ENCODE measurements at regions of chr10 and their contacts with region 1.

Region 1: GRCh38 chr10:74826142-74827044 is at the start of gene KAT6B:
- DNase-seq: peak; percentile 93 to 100 (median 100)
- ATAC-seq: peak; percentile 86
- H3K4me3 ChIP-seq: peak within 1 kb of the TSS; percentile 86
- H3K4me3 Mint-ChIP-seq: peak within 1 kb of the TSS; percentile 90 to 98 (median 92)
- H3K27ac ChIP-seq: peak within 1 kb of the TSS; percentile 98
- H3K27ac Mint-ChIP-seq: peak within 1 kb of the TSS; percentile 92 to 99 (median 98)
- H3K4me1 ChIP-seq: peaks cover 22 to 50% of the 10 kb centered on the region in 2 donors
- H3K4me1 Mint-ChIP-seq: peaks cover 44 to 74% (median 69%) of the 10 kb centered on the region in 7 donors
- H3K27me3 ChIP-seq: no peaks in the 10 kb centered on the region
- H3K27me3 Mint-ChIP-seq: no peaks in the 10 kb centered on the region
- total RNA-seq, gene KAT6B: 33.2 to 80.5 (median 68.5) TPM

Region 2: GRCh38 chr10:74176380-74177139 is 649.8 kb before region 1 on chr10:
- CTCF ChIA-PET with region 1: no interaction called
- POLR2A ChIA-PET with region 1: no interaction called
- intact Hi-C with region 1: loop called in 1 of 2 experiments (anchors 2 kb)
- DNase-seq: peak; percentile 90 to 96 (median 95)
- ATAC-seq: peak; percentile 98
- H3K4me3 ChIP-seq: peak overlapping the region; percentile 84
- H3K4me3 Mint-ChIP-seq: peak overlapping the region; percentile 87 to 98 (median 93)
- H3K27ac ChIP-seq: peak overlapping the region; percentile 86
- H3K27ac Mint-ChIP-seq: peak overlapping the region; percentile 94 to 98 (median 97)
- H3K4me1 ChIP-seq: peaks cover 6 to 7% of the 10 kb centered on the region in 2 donors
- H3K4me1 Mint-ChIP-seq: peaks cover 14 to 46% (median 40%) of the 10 kb centered on the region in 7 donors
- H3K27me3 ChIP-seq: no peaks in the 10 kb centered on the region
- H3K27me3 Mint-ChIP-seq: no peaks in the 10 kb centered on the region

Region 3: DNA sequence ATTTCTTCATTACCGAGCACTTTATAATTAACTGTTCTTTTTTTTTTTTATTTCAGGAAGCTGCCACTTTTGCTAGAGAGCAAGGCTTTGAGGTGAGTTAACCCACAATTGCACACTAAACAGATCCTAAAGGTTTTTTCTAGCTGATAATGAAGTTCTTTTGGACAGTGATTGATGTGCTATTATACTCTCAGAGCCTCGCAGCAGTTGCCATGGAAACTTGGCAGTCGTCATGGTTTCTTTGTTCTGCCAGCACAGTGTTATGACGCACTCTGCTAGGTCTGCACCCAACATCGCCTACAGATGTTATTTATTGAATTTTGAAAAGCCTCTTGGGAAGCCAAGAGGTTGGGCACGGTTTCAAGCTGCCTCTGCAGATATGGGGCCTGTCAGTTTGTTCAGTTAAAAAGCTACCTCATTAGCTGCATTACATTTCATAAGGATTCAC is 237.1 kb before region 1 on chr10:
- CTCF ChIA-PET with region 1: no interaction called
- POLR2A ChIA-PET with region 1: interaction called, 5 read pairs
- intact Hi-C with region 1: loop called (anchors 1 kb)
- DNase-seq: peak; percentile 41 to 97 (median 92)
- ATAC-seq: peak; percentile 88
- H3K4me3 ChIP-seq: no peak overlapping the region
- H3K4me3 Mint-ChIP-seq: peak overlapping the region in 8 of 10 donors; percentile 6 to 75 (median 60)
- H3K27ac ChIP-seq: peak overlapping the region; percentile 69
- H3K27ac Mint-ChIP-seq: peak overlapping the region; percentile 70 to 97 (median 93)
- H3K4me1 ChIP-seq: peaks cover 37 to 42% of the 10 kb centered on the region in 2 donors
- H3K4me1 Mint-ChIP-seq: peaks cover 21 to 66% (median 59%) of the 10 kb centered on the region in 7 donors
- H3K27me3 ChIP-seq: no peaks in the 10 kb centered on the region
- H3K27me3 Mint-ChIP-seq: no peaks in the 10 kb centered on the region

Region 4: DNA sequence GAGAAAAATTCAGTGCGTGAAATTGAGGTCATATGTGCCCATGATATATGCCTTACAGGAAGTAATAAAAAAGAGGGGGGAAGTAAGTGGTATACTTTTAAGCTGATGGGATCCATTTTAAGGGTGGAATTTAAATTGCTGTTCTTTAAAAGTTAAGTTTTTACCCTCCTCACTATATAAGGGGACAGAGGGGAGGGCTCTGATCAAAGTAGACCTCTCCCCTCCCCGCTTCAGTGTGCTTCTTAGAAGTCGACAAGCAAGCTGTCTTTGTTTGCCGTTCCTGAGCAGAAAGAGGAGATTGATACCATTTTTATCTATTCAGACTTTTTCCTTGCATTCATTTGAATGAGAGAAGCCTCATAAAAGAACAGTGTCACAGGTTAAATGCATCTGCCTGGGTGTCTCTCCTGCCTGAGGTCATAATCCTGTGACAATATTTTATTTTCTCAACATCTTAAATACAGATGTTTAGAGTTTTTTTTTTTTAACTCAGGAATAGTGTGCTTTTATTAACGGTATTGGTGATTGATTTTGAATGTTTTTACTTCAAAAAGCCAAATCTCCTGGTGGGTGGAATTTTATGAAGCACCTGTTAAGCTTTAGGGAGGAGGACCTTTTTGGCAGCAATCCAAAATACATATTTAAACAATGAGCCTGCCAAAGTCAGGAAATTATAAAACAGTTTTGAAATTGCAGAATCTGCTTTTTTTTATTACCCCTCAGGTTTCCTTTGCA is 141.7 kb after region 1 on chr10:
- CTCF ChIA-PET with region 1: no interaction called
- POLR2A ChIA-PET with region 1: interaction called, 4 read pairs
- intact Hi-C with region 1: loop called in 1 of 2 experiments (anchors 1 kb)
- DNase-seq: peak in 7 of 9 donors; percentile 31 to 58 (median 49)
- ATAC-seq: peak; percentile 81
- H3K4me3 ChIP-seq: no peak overlapping the region
- H3K4me3 Mint-ChIP-seq: peak overlapping the region in 9 of 10 donors; percentile 66 to 81 (median 76)
- H3K27ac ChIP-seq: peak overlapping the region; percentile 70
- H3K27ac Mint-ChIP-seq: peak overlapping the region; percentile 7 to 97 (median 93)
- H3K4me1 ChIP-seq: peaks cover 6 to 15% of the 10 kb centered on the region in 2 donors
- H3K4me1 Mint-ChIP-seq: peaks cover 22 to 59% (median 54%) of the 10 kb centered on the region in 7 donors
- H3K27me3 ChIP-seq: no peaks in the 10 kb centered on the region
- H3K27me3 Mint-ChIP-seq: no peaks in the 10 kb centered on the region

Region 5: GRCh38 chr10:75042292-75042974 is 216.0 kb after region 1 on chr10:
- CTCF ChIA-PET with region 1: no interaction called
- POLR2A ChIA-PET with region 1: no interaction called
- intact Hi-C with region 1: loop called in 1 of 2 experiments (anchors 2 kb)
- DNase-seq: no peak
- ATAC-seq: no peak
- H3K4me3 ChIP-seq: no peak overlapping the region
- H3K4me3 Mint-ChIP-seq: no peak overlapping the region
- H3K27ac ChIP-seq: no peak overlapping the region
- H3K27ac Mint-ChIP-seq: peak overlapping the region in 1 of 9 donors; percentile 69
- H3K4me1 ChIP-seq: no peaks in the 10 kb centered on the region
- H3K4me1 Mint-ChIP-seq: peaks cover 3 to 38% (median 7%) of the 10 kb centered on the region in 7 donors
- H3K27me3 ChIP-seq: no peaks in the 10 kb centered on the region
- H3K27me3 Mint-ChIP-seq: peaks cover 0 to 18% (median 8%) of the 10 kb centered on the region in 5 donors

Region 6: DNA sequence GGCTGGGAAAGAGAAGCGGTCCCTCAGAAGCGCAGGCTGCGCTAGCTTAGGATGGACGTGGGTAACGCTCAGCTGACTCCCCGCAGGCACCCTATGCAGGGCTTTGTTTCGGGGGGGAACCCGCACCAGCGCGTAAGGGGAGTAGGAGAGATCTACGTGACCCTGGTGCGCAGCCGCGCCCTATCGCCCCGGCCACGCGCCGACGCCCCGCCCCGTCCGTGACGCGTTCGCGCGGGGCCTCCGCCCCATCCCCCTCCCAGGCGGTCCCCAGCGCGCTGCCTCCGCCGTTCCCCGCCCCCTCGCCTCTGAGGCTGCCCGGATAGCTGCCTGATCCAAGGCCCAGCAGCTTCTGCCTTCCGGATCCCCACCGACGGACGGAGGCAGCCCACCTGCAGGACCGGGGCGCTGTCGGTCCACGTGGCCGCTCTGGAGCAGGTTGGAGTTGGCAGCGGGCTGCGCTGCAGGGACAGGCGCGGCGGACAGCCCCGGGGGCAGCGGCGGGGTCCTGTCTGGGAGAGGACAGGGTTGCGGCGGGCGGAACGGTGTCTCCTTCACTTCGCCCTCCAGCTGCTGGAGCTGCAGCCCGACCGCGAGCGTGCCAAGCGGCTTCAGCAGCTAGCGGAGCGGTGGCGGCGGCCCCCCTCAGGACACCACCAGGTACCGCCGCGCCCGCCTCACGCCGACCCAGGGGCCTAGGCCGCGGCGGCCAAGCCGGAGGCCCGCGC is 384.1 kb after region 1 on chr10 and contains the start of gene VDAC2:
- CTCF ChIA-PET with region 1: no interaction called
- POLR2A ChIA-PET with region 1: interaction called, 3 read pairs
- intact Hi-C with region 1: loop called in 1 of 2 experiments (anchors 1 kb)
- DNase-seq: peak; percentile 92 to 100 (median 98)
- ATAC-seq: peak; percentile 92
- H3K4me3 ChIP-seq: peak within 1 kb of the TSS; percentile 81
- H3K4me3 Mint-ChIP-seq: peak within 1 kb of the TSS; percentile 87 to 100 (median 98)
- H3K27ac ChIP-seq: peak within 1 kb of the TSS; percentile 96
- H3K27ac Mint-ChIP-seq: peak within 1 kb of the TSS; percentile 99 to 100 (median 100)
- H3K4me1 ChIP-seq: peaks cover 15 to 21% of the 10 kb centered on the region in 2 donors
- H3K4me1 Mint-ChIP-seq: peaks cover 21 to 44% (median 29%) of the 10 kb centered on the region in 7 donors
- H3K27me3 ChIP-seq: no peaks in the 10 kb centered on the region
- H3K27me3 Mint-ChIP-seq: no peaks in the 10 kb centered on the region
- total RNA-seq, gene VDAC2: 82.8 to 138 (median 121) TPM